HEK293 (cell line): ENCODE measurements at regions of chr20 and their contacts with region 1.

Region 1: DNA sequence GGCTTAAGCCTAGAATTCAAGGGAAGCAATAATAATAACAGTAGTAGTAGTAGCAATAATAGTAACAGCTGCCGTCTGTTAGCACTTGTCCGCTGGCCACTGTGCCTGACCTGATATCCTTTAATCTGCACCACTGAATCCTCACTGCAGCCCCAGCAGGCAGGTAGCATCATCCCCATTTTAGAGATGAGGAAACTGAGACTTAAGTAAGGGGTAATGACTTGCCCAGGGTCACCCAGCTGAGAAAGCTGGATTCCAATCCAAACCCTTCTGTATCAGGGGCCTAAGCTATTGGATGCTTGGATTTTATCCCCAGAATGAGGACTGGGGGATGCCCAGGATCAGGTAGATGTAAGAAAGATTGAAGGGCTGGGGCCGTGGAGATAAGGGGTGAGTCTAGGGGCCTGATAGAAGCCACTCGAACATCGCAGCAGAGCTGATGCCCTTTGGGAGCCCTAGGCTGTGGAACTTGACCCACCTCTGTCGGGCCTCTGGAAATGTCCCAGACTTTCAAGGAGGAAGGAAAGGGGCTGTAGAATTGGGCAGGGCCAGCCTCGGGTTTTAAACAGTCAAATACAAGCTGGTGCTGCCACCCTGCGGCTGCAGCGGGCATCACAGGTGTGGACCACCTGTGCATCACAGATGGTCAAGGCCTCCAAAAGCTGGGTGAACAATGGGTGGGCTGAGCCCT is 102.1 kb upstream of the MYL9 start:
- H3K4me3 ChIP-seq: no peak overlapping the region
- H3K27ac ChIP-seq: no peak overlapping the region
- H3K4me1 ChIP-seq: no peaks in the 10 kb centered on the region
- CTCF ChIP-seq: peak; percentile 85

Region 2: DNA sequence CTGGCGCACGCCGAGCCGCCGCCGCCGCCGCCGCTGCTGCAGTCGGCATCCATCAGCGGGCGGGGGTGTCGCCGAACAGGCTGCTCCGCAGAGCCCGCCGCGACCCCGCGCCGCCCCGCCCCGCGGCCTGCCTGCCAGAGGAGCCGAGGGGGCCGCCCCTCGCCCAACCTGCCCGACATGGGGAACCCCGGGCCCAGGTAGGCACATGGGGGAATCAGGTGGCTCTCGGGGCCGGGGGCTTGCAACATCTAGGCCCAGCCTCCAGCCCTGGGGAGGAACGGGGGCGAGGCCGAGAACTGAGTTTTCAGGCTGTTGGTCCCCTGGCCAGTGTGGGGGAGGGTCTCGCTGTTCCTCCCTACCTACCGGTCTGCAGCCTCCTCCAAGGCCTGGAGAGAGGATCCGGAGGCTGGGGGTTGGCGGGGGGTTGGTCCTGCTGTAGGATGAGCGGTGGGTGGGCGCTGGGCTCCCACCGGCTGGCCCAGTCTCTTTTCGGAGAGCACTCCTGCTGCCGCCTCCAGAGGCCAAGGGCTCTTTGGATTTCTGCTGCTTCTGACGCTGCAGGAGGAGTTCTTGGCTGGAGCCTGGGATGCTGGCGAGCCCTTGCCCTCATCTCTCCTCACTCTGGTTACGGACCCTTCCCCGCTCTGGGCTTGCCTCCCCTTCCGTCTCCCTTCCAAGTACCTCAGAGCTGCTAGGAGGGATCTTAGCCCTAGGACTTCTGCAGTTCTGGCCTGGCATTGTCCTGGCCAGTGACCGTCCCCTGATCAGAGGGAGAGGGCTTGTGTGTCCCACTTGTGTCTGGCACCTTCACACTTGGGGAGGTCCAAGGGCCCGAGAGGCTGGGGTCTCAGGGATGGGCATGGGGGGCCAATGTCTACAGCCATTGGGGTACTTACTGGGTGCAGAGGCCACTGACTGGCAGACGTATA is 284.2 kb before region 1 on chr20 and contains the start of gene EPB41L1:
- CTCF ChIA-PET with region 1: interaction called, 29 read pairs
- POLR2A ChIA-PET with region 1: no interaction called
- H3K4me3 ChIP-seq: peak within 1 kb of the TSS; percentile 55
- H3K27ac ChIP-seq: peak within 1 kb of the TSS; percentile 46; the same call in 1 of the 2 replicates
- H3K4me1 ChIP-seq: peaks cover 8% of the 10 kb centered on the region
- CTCF ChIP-seq: no peak

Region 3: GRCh38 chr20:36214684-36215256 is 224.4 kb before region 1 on chr20:
- CTCF ChIA-PET with region 1: interaction called, 16 read pairs
- POLR2A ChIA-PET with region 1: no interaction called
- H3K4me3 ChIP-seq: no peak overlapping the region
- H3K27ac ChIP-seq: no peak overlapping the region
- H3K4me1 ChIP-seq: no peaks in the 10 kb centered on the region
- CTCF ChIP-seq: peak; percentile 40

Region 4: GRCh38 chr20:36228770-36229169 is 210.4 kb before region 1 on chr20:
- CTCF ChIA-PET with region 1: no interaction called
- POLR2A ChIA-PET with region 1: no interaction called
- H3K4me3 ChIP-seq: no peak overlapping the region
- H3K27ac ChIP-seq: no peak overlapping the region
- H3K4me1 ChIP-seq: no peaks in the 10 kb centered on the region
- CTCF ChIP-seq: no peak

Region 5: GRCh38 chr20:36399147-36399968 is 39.8 kb before region 1 on chr20:
- CTCF ChIA-PET with region 1: interaction called, 10 read pairs
- POLR2A ChIA-PET with region 1: no interaction called
- H3K4me3 ChIP-seq: no peak overlapping the region
- H3K27ac ChIP-seq: no peak overlapping the region
- H3K4me1 ChIP-seq: no peaks in the 10 kb centered on the region
- CTCF ChIP-seq: no peak

Region 6: GRCh38 chr20:36454698-36455427 is 15.7 kb after region 1 on chr20:
- CTCF ChIA-PET with region 1: interaction called, 16 read pairs
- POLR2A ChIA-PET with region 1: no interaction called
- H3K4me3 ChIP-seq: no peak overlapping the region
- H3K27ac ChIP-seq: no peak overlapping the region
- H3K4me1 ChIP-seq: no peaks in the 10 kb centered on the region
- CTCF ChIP-seq: no peak

Region 7: DNA sequence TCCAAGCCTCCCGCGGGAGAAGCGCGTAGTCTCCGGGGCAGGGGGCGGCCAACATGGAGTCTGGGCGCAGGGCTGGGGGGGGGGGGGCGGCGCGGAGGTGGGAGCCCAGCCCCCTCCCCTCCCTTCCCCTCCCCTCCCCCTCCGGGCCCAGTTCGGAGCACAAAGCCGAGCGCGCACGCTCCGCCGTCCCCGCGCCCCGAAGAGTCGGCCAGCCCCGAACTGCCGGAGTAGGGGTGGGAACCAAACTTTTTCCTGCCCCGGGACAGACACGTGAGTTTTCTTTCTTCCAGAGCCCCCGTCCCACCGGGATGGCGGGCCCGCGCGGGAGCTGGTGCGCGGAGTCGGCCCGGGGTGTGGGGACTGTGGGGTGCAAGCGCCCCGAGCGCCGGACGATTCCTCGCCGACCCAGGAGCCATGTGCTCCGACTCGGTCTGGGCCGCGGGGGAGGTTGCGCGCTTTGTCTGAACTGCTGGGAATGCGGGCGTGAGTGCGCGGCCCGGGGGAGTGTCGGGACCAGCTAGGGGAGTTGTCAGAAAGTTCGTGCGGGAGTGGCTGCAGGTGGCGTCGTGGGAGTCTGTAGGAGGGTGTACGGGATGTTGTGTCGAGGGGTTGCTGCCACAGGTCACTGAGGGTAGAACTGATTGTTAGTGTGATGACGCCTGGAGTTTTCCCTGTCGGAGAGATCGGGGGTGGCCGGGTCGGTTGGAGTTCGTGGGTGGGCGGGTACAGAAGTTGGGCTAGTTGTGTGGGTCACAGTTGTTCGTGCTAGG is 135.4 kb after region 1 on chr20:
- CTCF ChIA-PET with region 1: no interaction called
- POLR2A ChIA-PET with region 1: no interaction called
- H3K4me3 ChIP-seq: peak overlapping the region; percentile 70
- H3K27ac ChIP-seq: peak overlapping the region; percentile 94
- H3K4me1 ChIP-seq: peaks cover 4% of the 10 kb centered on the region; the same call in 1 of the 2 replicates
- CTCF ChIP-seq: peak; percentile 62